Gastrocnemius medialis (tissue), 4 donors: ENCODE measurements at regions of chr15 and their contacts with region 1.

Region 1: DNA sequence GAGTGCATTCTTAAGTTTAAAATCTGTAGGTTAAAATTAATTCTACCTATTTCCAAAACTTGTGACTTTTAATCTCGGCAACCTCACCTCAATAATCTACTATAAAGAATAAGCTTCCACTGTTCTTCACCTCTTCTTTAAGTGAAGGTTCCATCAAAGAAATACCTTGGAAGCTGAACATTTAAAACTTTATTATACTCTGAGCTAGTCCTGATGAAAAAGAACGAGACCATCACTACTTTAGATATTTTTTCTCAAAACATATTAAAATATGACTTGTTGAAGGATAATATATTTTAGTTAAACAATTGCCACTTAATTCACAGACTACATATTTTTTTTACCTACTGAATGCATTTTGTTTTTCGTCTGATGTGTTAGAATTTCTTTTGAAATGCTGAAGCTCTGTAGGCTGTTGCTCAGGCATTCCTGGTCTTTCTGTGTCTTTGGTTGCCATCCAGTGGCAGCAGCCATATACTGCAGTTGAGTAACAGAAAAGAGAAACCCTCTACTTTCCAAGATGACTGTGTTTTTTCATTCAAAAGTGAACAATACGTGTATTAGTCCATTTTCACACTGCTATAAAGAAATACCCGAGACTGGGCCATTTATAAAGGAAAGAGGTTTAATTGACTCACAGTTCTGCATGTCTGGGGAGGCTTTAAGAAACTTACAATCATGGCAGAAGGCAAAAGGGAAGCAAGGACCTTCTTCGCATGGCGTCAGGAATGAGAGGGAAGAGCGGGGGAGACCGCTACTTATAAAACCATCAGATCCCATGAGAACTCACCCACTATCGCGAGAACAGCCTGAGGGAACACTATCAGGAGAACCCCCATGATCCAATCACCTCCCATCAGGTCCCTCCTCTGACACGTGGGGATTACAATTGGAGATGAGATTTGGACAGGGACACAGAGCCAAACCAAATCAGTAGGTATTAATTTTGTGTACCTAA is 4.5 kb upstream of the GOLGA8B start:
- DNase-seq: peak in 1 of 2 donors; percentile 33
- ATAC-seq: peak; percentile 70 to 73
- H3K4me3 ChIP-seq: peak overlapping the region; percentile 22 to 40 (median 30)
- H3K27ac ChIP-seq: no peak overlapping the region
- H3K4me1 ChIP-seq: peaks cover 4 to 6% of the 10 kb centered on the region in 2 donors
- H3K27me3 ChIP-seq: no peaks in the 10 kb centered on the region
- CTCF ChIP-seq: peak; percentile 58 to 79 (median 73)
- POLR2A ChIP-seq: no peak

Region 2: GRCh38 chr15:34065941-34066340 is 522.1 kb before region 1 on chr15:
- in situ Hi-C with region 1: no loop called
- intact Hi-C with region 1: loop called (anchors 5 kb)
- DNase-seq: no peak
- ATAC-seq: no peak
- H3K4me3 ChIP-seq: no peak overlapping the region
- H3K27ac ChIP-seq: no peak overlapping the region
- H3K4me1 ChIP-seq: peaks cover 0 to 6% of the 10 kb centered on the region in 2 donors
- H3K27me3 ChIP-seq: no peaks in the 10 kb centered on the region
- CTCF ChIP-seq: no peak
- POLR2A ChIP-seq: no peak

Region 3: GRCh38 chr15:34342737-34343575 is 245.0 kb before region 1 on chr15 and contains the starts of genes NOP10 and NUTM1:
- in situ Hi-C with region 1: no loop called
- intact Hi-C with region 1: loop called (anchors 10 kb)
- DNase-seq: peak; percentile 83 to 89
- ATAC-seq: peak; percentile 98 to 99
- H3K4me3 ChIP-seq: peak within 1 kb of the TSS; percentile 80 to 99 (median 84)
- H3K27ac ChIP-seq: peak within 1 kb of the TSS; percentile 88 to 96 (median 90)
- H3K4me1 ChIP-seq: peaks cover 14 to 21% of the 10 kb centered on the region in 2 donors
- H3K27me3 ChIP-seq: no peaks in the 10 kb centered on the region
- CTCF ChIP-seq: peak; percentile 93 to 97 (median 94)
- POLR2A ChIP-seq: peak; percentile 67 to 72
- total RNA-seq, gene NOP10: 142 to 194 (median 170) TPM
- total RNA-seq, gene NUTM1: not detected

Region 4: GRCh38 chr15:34437687-34438086 is 150.3 kb before region 1 on chr15 and contains the start of gene GOLGA8A:
- in situ Hi-C with region 1: no loop called
- intact Hi-C with region 1: loop called (anchors 10 kb)
- DNase-seq: peak; percentile 33 to 65
- ATAC-seq: peak; percentile 56 to 80
- H3K4me3 ChIP-seq: peak within 1 kb of the TSS; percentile 53 to 78 (median 58)
- H3K27ac ChIP-seq: peak within 1 kb of the TSS in 2 of 4 donors; percentile 34
- H3K4me1 ChIP-seq: no peaks in the 10 kb centered on the region
- H3K27me3 ChIP-seq: no peaks in the 10 kb centered on the region
- CTCF ChIP-seq: no peak
- POLR2A ChIP-seq: no peak
- total RNA-seq, gene GOLGA8A: 0.85 to 7.0 (median 3.1) TPM

Region 5: DNA sequence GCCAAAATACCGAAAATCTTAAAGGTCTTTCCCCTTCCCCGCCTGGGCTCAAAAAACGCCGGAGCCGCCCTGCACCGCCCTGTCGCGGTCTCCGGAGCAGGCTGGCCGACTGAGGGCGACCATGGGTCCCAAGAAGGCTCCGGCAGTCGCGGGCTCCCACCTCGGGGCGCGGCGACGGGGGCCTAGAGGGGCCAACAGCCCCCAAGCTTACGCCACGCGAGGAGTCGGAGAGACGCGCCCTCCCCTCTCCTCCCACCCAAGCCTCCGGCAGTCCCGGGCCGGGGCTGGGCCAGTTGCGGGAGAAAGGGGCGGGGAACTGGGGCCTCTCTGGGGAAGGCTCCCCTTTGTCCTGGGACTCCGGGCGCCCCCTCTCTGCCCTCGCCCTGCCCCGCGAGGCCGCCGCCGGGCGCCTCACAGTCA is 73.7 kb before region 1 on chr15:
- in situ Hi-C with region 1: loop called in 1 of 4 experiments (anchors 10 kb)
- intact Hi-C with region 1: no loop called
- DNase-seq: peak in 1 of 2 donors; percentile 17
- ATAC-seq: peak; percentile 71
- H3K4me3 ChIP-seq: peak overlapping the region; percentile 71 to 83 (median 78)
- H3K27ac ChIP-seq: peak overlapping the region; percentile 62 to 79 (median 72)
- H3K4me1 ChIP-seq: no peaks in the 10 kb centered on the region
- H3K27me3 ChIP-seq: no peaks in the 10 kb centered on the region
- CTCF ChIP-seq: no peak
- POLR2A ChIP-seq: no peak